Mammary epithelial cell (primary cell): ENCODE measurements at regions of chr17 and their contacts with region 1.

Region 1: GRCh38 chr17:70168977-70169708 is at the start of gene KCNJ2:
- DNase-seq: peak; percentile 74
- H3K4me3 ChIP-seq: peak within 1 kb of the TSS; percentile 59 to 64 (median 60)
- H3K27ac ChIP-seq: no peak within 1 kb of the TSS
- H3K4me1 ChIP-seq: peaks cover 31% of the 10 kb centered on the region
- H3K27me3 ChIP-seq: no peaks in the 10 kb centered on the region
- CTCF ChIP-seq: no peak
- total RNA-seq, gene KCNJ2: 0.26 to 4.3 TPM

Region 2: GRCh38 chr17:69574257-69575197 is 594.6 kb before region 1 on chr17:
- CTCF ChIA-PET with region 1: no interaction called
- dilution Hi-C with region 1: no loop called
- in situ Hi-C with region 1: no loop called
- intact Hi-C with region 1: loop called (anchors 1 kb)
- DNase-seq: no peak
- H3K4me3 ChIP-seq: no peak overlapping the region
- H3K27ac ChIP-seq: no peak overlapping the region
- H3K4me1 ChIP-seq: no peaks in the 10 kb centered on the region
- H3K27me3 ChIP-seq: no peaks in the 10 kb centered on the region
- CTCF ChIP-seq: no peak

Region 3: DNA sequence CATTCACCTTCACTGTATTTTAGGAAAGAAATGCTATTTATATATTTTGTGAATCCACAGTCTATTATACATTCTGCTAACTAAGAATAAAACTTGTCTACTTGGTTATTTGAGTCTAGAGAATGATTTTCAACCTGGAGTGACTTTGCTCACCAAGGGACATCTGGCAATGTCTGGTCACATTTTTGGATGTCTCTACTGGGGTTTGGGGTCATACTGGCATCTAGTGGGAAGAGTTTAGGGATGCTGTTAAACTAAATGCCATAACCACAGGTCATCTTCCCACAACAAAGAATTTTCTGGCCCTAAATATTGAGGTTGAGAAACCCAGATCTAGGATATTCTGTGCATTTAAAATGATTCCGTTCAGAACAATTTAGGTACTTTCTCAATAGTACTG is 68.2 kb before region 1 on chr17:
- CTCF ChIA-PET with region 1: no interaction called
- dilution Hi-C with region 1: no loop called
- in situ Hi-C with region 1: no loop called
- intact Hi-C with region 1: no loop called
- DNase-seq: no peak
- H3K4me3 ChIP-seq: no peak overlapping the region
- H3K27ac ChIP-seq: no peak overlapping the region
- H3K4me1 ChIP-seq: no peaks in the 10 kb centered on the region
- H3K27me3 ChIP-seq: no peaks in the 10 kb centered on the region
- CTCF ChIP-seq: peak; percentile 7 to 28

Region 4: GRCh38 chr17:70184770-70185169 is 15.6 kb after region 1 on chr17:
- CTCF ChIA-PET with region 1: no interaction called
- dilution Hi-C with region 1: no loop called
- in situ Hi-C with region 1: no loop called
- intact Hi-C with region 1: loop called (anchors 2 kb)
- DNase-seq: peak; percentile 76
- H3K4me3 ChIP-seq: no peak overlapping the region
- H3K27ac ChIP-seq: no peak overlapping the region
- H3K4me1 ChIP-seq: peaks cover 33% of the 10 kb centered on the region
- H3K27me3 ChIP-seq: no peaks in the 10 kb centered on the region
- CTCF ChIP-seq: no peak

Region 5: DNA sequence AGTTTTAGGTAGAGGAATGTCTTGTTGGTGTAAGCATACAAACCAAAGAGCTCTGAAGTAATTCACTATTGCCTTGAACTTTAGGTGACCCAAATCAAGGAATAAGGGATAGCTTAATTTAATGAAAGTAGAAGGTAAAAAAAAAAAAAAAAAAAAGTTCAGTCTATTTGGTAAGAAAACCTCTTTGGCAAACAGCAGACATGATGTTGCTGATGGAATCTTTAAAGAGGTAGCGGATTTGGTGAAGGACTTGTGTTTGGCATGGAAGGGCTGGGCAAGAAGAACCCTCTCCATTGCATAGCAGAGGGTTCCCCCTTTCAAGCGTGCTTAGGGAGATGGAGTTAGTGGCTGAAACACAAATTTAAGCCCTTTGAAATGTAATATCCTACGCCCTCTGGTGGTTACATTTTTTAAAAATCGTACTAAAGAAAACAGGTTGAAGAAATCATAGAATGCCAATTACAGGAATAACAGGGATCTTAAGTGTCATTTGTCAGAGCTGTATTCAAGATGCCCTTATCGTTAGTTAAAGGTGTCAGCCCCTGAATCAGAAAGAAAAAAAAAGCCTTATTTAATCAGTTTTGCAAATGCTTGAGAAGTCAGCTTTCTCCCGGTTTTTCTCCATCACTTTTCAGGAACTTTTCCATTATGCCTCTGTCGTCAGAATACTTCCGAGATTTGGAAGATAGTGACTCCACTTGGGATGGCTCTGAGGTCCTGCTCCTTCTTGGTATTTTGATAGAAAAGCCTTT is 383.3 kb after region 1 on chr17:
- CTCF ChIA-PET with region 1: no interaction called
- dilution Hi-C with region 1: no loop called
- in situ Hi-C with region 1: no loop called
- intact Hi-C with region 1: loop called (anchors 10 kb)
- DNase-seq: peak; percentile 18
- H3K4me3 ChIP-seq: no peak overlapping the region
- H3K27ac ChIP-seq: no peak overlapping the region
- H3K4me1 ChIP-seq: no peaks in the 10 kb centered on the region
- H3K27me3 ChIP-seq: no peaks in the 10 kb centered on the region
- CTCF ChIP-seq: peak; percentile 18 to 52

Region 6: GRCh38 chr17:70622368-70623260 is 453.5 kb after region 1 on chr17:
- CTCF ChIA-PET with region 1: no interaction called
- dilution Hi-C with region 1: no loop called
- in situ Hi-C with region 1: no loop called
- intact Hi-C with region 1: loop called (anchors 10 kb)
- DNase-seq: peak; percentile 30
- H3K4me3 ChIP-seq: no peak overlapping the region
- H3K27ac ChIP-seq: no peak overlapping the region
- H3K4me1 ChIP-seq: no peaks in the 10 kb centered on the region
- H3K27me3 ChIP-seq: no peaks in the 10 kb centered on the region
- CTCF ChIP-seq: peak; percentile 67 to 85